ENCODE measurements at regions of chr3 and their contacts with region 1.

Region 1: DNA sequence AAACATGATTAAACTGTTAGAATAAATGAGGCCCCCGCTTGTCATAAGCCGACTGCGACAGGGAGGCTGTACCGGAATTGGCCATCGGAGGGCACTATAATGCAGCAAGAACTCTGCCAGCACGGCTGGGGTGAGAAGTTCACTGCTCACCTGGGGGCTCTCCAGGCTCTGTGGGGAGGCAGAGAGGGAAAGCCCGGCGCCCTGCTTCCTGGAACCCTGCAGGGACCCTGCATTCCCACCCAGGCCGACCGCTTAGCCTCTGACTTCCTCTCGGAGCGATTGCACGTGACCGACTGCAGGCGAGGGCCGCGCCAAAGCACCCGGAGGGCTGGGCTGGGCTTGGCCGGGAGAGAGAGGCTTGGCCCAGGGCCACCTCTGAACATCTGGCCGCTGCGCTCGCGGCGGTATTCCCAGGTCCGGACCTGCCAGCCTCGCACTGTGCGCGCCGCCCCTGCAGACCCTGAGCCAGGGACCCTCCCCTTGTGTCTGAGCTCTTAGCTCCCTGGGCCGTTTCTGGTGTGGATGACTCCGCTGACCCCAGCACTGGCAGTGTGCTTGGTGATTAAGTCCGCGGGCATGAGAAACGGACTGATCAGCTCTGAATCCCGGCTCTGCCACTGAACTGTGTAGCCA is 26.2 kb downstream of the DRD3 start:
- DNase-seq: peak; percentile 86
- H3K4me3 ChIP-seq: peak overlapping the region; percentile 22 to 61 (median 50)
- H3K27ac ChIP-seq: peak overlapping the region in 2 of 4 donors; percentile 16 to 64
- H3K4me1 ChIP-seq: peaks cover 0 to 6% (median 3%) of the 10 kb centered on the region in 4 donors
- H3K27me3 ChIP-seq: no peaks in the 10 kb centered on the region
- CTCF ChIP-seq: peak; percentile 40 to 86 (median 78)
- EP300 ChIP-seq: no peak
- POLR2A ChIP-seq: no peak

Region 2: DNA sequence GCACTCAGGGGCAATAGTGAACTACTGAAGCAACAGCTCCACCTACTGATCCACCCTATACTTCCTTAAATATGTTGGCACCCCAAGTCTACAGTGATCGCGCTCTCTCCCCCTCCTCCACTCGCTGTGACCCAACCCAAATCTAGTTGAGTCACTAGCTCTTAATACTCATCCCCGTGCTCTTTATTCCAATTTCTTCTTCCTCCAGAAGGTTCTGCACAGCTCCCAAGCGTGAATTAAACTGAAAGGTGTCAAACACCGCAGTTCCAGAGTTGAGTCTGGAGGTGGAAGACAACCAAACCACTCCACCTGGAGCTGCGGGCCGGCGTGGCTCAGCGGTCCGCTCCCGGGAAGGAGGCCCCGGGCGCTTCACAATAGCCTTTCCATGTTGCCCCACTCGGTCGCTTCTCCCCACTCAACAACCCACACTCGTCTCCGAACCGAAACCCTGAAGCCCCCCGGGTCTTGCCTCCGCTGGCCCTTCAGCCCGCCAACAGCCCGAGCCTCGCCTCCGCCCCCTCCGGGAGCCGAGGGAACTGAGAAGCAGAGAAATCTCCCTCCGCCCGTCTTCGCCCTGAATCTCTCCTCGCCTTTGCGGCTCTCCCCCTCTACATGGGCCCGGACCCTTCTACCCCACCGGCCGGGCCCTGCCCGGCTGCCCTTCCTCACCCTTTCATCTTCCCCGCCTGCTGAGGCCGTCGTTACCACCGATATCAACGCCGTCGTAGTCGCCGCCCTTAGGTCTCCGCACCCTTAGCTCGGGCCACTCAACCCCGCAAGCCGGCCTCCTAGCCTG is 407.2 kb before region 1 on chr3:
- intact Hi-C with region 1: no loop called
- DNase-seq: peak; percentile 88
- H3K4me3 ChIP-seq: peak overlapping the region; percentile 75 to 84 (median 78)
- H3K27ac ChIP-seq: peak overlapping the region; percentile 94 to 98 (median 97)
- H3K4me1 ChIP-seq: peaks cover 0 to 67% (median 34%) of the 10 kb centered on the region in 4 donors
- H3K27me3 ChIP-seq: no peaks in the 10 kb centered on the region
- CTCF ChIP-seq: peak; percentile 52 to 65 (median 59)
- EP300 ChIP-seq: no peak
- POLR2A ChIP-seq: peak in 1 of 2 donors; percentile 6

Region 3: GRCh38 chr3:114484919-114485318 is 332.3 kb after region 1 on chr3:
- intact Hi-C with region 1: no loop called
- DNase-seq: no peak
- H3K4me3 ChIP-seq: no peak overlapping the region
- H3K27ac ChIP-seq: no peak overlapping the region
- H3K4me1 ChIP-seq: peaks cover 0 to 32% (median 8%) of the 10 kb centered on the region in 4 donors
- H3K27me3 ChIP-seq: no peaks in the 10 kb centered on the region
- CTCF ChIP-seq: no peak
- EP300 ChIP-seq: no peak
- POLR2A ChIP-seq: no peak

Region 4: GRCh38 chr3:114582929-114583328 is 430.3 kb after region 1 on chr3:
- intact Hi-C with region 1: loop called (anchors 10 kb)
- DNase-seq: no peak
- H3K4me3 ChIP-seq: no peak overlapping the region
- H3K27ac ChIP-seq: no peak overlapping the region
- H3K4me1 ChIP-seq: peaks cover 0 to 19% (median 0%) of the 10 kb centered on the region in 4 donors
- H3K27me3 ChIP-seq: no peaks in the 10 kb centered on the region
- CTCF ChIP-seq: no peak
- EP300 ChIP-seq: no peak
- POLR2A ChIP-seq: no peak

Region 5: GRCh38 chr3:115169808-115170207 is 1017.2 kb after region 1 on chr3:
- intact Hi-C with region 1: loop called (anchors 10 kb)
- DNase-seq: no peak
- H3K4me3 ChIP-seq: no peak overlapping the region
- H3K27ac ChIP-seq: no peak overlapping the region
- H3K4me1 ChIP-seq: no peaks in the 10 kb centered on the region
- H3K27me3 ChIP-seq: no peaks in the 10 kb centered on the region
- CTCF ChIP-seq: peak in 2 of 4 experiments; percentile 28
- EP300 ChIP-seq: no peak
- POLR2A ChIP-seq: no peak

Measured in sigmoid colon (tissue), 7 donors.